Naive thymus-derived CD4-positive, alpha-beta T cell (primary cell): ENCODE measurements at regions of chr12 and their contacts with region 1.

Region 1: GRCh38 chr12:674272-674781 is 11.1 kb upstream of the NINJ2 start:
- DNase-seq: peak in 8 of 9 donors; percentile 54 to 84 (median 74)
- ATAC-seq: peak; percentile 95
- H3K4me3 ChIP-seq: peak overlapping the region; percentile 5
- H3K4me3 Mint-ChIP-seq: peak overlapping the region; percentile 31 to 80 (median 69)
- H3K27ac ChIP-seq: peak overlapping the region; percentile 58
- H3K27ac Mint-ChIP-seq: peak overlapping the region; percentile 71 to 96 (median 89)
- H3K4me1 ChIP-seq: peaks cover 31 to 49% of the 10 kb centered on the region in 2 donors
- H3K4me1 Mint-ChIP-seq: peaks cover 28 to 65% (median 51%) of the 10 kb centered on the region in 7 donors
- H3K27me3 ChIP-seq: no peaks in the 10 kb centered on the region
- H3K27me3 Mint-ChIP-seq: no peaks in the 10 kb centered on the region

Region 2: GRCh38 chr12:278046-278445 is 396.3 kb before region 1 on chr12:
- CTCF ChIA-PET with region 1: no interaction called
- POLR2A ChIA-PET with region 1: no interaction called
- intact Hi-C with region 1: no loop called
- DNase-seq: no peak
- ATAC-seq: no peak
- H3K4me3 ChIP-seq: no peak overlapping the region
- H3K4me3 Mint-ChIP-seq: no peak overlapping the region
- H3K27ac ChIP-seq: no peak overlapping the region
- H3K27ac Mint-ChIP-seq: peak overlapping the region in 2 of 9 donors; percentile 8 to 38
- H3K4me1 ChIP-seq: no peaks in the 10 kb centered on the region
- H3K4me1 Mint-ChIP-seq: peaks cover 0 to 4% (median 0%) of the 10 kb centered on the region in 7 donors
- H3K27me3 ChIP-seq: no peaks in the 10 kb centered on the region
- H3K27me3 Mint-ChIP-seq: no peaks in the 10 kb centered on the region

Region 3: GRCh38 chr12:530308-530707 is 144.0 kb before region 1 on chr12:
- CTCF ChIA-PET with region 1: no interaction called
- POLR2A ChIA-PET with region 1: no interaction called
- intact Hi-C with region 1: no loop called
- DNase-seq: no peak
- ATAC-seq: no peak
- H3K4me3 ChIP-seq: no peak overlapping the region
- H3K4me3 Mint-ChIP-seq: no peak overlapping the region
- H3K27ac ChIP-seq: no peak overlapping the region
- H3K27ac Mint-ChIP-seq: peak overlapping the region in 1 of 9 donors; percentile 30
- H3K4me1 ChIP-seq: no peaks in the 10 kb centered on the region
- H3K4me1 Mint-ChIP-seq: peaks cover 0 to 1% (median 0%) of the 10 kb centered on the region in 7 donors
- H3K27me3 ChIP-seq: no peaks in the 10 kb centered on the region
- H3K27me3 Mint-ChIP-seq: peaks cover 0 to 5% (median 3%) of the 10 kb centered on the region in 5 donors

Region 4: DNA sequence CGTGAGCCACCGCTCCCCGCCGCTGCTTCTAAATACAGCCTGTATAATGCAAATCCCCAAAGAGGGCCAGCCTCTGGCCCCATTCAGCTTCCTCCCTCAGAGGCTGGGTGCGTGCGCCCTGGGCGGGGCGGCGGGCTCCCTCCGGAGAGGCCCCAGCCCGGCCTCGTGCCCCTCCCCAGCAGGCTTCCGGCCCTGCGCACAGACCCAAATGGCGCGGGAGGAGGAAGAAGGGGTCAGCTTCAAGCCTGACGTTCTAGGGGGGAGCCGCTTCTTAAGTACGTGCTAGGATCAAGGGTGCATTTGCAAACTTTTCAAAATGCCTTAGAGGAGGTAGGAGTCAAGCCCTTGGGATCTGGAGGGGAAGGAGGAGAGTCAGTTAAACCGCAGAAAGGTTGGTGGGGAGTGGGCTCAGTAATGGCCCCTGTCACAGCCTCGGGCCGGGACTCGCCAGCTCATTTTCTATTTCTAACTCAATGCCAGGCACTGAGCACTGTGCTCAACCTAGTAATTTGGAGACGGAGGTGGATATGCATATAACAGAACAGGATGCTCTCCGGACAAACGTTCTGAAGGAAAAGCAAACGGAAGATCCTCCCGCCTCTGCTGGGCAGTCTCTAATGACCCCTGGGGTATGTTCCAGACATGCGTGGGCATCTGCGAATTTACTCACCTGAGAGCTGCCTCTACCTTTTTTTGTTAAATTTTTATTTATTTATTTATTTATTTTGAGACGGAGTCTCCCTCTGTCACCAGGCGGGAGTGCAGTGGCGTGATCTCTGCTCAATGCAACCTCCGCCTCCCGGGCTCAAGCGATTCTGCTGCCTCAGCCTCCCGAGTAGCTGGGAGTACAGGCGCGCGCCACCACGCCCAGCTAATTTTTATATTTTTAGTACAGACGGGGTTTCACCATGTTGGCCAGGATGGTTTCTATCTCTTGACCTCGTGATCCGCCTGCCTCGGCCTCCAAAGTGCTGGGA is 43.4 kb before region 1 on chr12:
- CTCF ChIA-PET with region 1: no interaction called
- POLR2A ChIA-PET with region 1: no interaction called
- intact Hi-C with region 1: loop called in 1 of 2 experiments (anchors 5 kb)
- DNase-seq: peak in 6 of 9 donors; percentile 54 to 88 (median 70)
- ATAC-seq: no peak
- H3K4me3 ChIP-seq: peak overlapping the region; percentile 53
- H3K4me3 Mint-ChIP-seq: peak overlapping the region in 8 of 10 donors; percentile 82 to 96 (median 91)
- H3K27ac ChIP-seq: peak overlapping the region; percentile 72
- H3K27ac Mint-ChIP-seq: peak overlapping the region in 7 of 9 donors; percentile 93 to 98 (median 95)
- H3K4me1 ChIP-seq: peaks cover 0 to 6% of the 10 kb centered on the region in 2 donors
- H3K4me1 Mint-ChIP-seq: peaks cover 7 to 47% (median 34%) of the 10 kb centered on the region in 7 donors
- H3K27me3 ChIP-seq: no peaks in the 10 kb centered on the region
- H3K27me3 Mint-ChIP-seq: no peaks in the 10 kb centered on the region

Region 5: GRCh38 chr12:662566-663292 is 11.6 kb before region 1 on chr12:
- CTCF ChIA-PET with region 1: no interaction called
- POLR2A ChIA-PET with region 1: interaction called, 7 read pairs
- intact Hi-C with region 1: loop called (anchors 1 to 2 kb)
- DNase-seq: no peak
- ATAC-seq: peak; percentile 47
- H3K4me3 ChIP-seq: peak overlapping the region; percentile 35
- H3K4me3 Mint-ChIP-seq: peak overlapping the region; percentile 54 to 93 (median 82)
- H3K27ac ChIP-seq: peak overlapping the region; percentile 49
- H3K27ac Mint-ChIP-seq: peak overlapping the region in 8 of 9 donors; percentile 16 to 85 (median 74)
- H3K4me1 ChIP-seq: peaks cover 15 to 26% of the 10 kb centered on the region in 2 donors
- H3K4me1 Mint-ChIP-seq: peaks cover 35 to 58% (median 54%) of the 10 kb centered on the region in 7 donors
- H3K27me3 ChIP-seq: no peaks in the 10 kb centered on the region
- H3K27me3 Mint-ChIP-seq: peaks cover 0 to 2% (median 0%) of the 10 kb centered on the region in 5 donors

Region 6: DNA sequence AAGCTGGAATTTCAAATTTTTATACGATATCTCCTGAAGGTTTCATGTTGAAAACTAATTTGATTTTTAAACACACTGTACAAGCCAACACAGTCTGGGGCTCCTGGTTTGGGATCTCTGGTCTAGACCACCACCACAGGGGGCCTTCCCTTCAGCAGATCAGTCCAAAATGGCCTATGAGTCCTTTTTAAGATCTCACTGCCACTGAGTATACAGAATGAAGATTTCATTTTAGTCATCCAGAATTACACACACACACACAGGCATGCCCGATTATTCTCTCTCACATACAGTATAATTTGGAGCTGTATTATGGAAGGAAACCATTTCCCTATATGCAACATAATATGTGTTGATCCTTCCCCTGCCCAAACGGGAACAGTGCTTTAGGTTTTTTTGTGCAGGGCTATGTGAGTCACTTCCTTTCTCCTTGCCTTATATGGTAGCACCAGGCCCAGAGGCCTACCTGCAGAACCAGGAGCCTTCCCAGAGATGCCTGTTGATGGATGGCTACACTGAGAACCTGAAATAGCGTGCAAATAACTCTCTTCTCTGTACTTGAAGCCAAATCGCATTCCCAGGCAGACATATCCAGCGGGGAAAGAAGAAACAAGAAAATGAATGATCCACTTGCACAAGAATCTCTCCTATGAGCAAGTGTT is 50.0 kb after region 1 on chr12:
- CTCF ChIA-PET with region 1: no interaction called
- POLR2A ChIA-PET with region 1: interaction called, 9 read pairs
- intact Hi-C with region 1: loop called in 1 of 2 experiments (anchors 5 kb)
- DNase-seq: peak in 1 of 9 donors; percentile 31
- ATAC-seq: peak; percentile 69
- H3K4me3 ChIP-seq: no peak overlapping the region
- H3K4me3 Mint-ChIP-seq: peak overlapping the region; percentile 1 to 56 (median 40)
- H3K27ac ChIP-seq: no peak overlapping the region
- H3K27ac Mint-ChIP-seq: peak overlapping the region; percentile 67 to 95 (median 89)
- H3K4me1 ChIP-seq: peaks cover 26 to 68% of the 10 kb centered on the region in 2 donors
- H3K4me1 Mint-ChIP-seq: peaks cover 37 to 96% (median 89%) of the 10 kb centered on the region in 7 donors
- H3K27me3 ChIP-seq: no peaks in the 10 kb centered on the region
- H3K27me3 Mint-ChIP-seq: no peaks in the 10 kb centered on the region